Colonic mucosa (tissue), 4 donors: ENCODE measurements at regions of chr17 and their contacts with region 1.

Region 1: DNA sequence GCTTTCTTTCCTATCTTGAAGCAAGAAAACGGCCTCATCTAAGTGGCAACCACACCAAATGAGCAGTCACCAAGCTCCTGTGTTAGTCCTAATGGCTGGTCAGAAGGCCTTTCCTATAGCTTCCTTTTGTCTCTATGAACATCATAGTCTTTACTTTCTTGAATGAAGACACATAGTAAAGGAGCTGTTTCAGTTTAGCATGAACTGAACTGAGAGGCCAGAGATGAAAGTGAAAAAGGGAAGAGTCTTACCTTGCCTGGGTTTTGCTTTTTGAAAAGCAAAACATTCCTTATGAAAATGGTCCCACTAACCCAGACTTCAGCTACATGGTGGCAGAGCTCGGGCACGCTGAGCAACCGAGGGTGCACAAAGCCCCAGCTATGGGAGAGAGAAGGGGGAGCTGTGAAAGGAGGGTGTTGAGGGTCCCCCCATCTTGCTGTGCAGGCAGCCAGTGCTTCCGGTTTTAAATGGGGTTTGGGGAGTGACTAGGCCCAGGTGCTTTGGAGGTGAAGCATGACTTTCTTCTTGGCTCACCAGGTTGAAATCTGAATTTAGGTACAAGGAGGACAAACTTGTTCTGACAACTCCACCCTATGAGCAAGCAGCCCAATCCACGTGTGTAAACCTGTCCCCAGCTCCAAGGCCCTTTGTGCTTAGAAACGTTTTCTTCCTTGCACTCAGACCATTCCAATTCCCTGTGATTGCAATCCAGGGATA is 9.1 kb upstream of the PSMC3IP start:
- DNase-seq: no peak
- H3K4me3 ChIP-seq: no peak overlapping the region
- H3K27ac ChIP-seq: no peak overlapping the region
- H3K4me1 ChIP-seq: no peaks in the 10 kb centered on the region
- H3K27me3 ChIP-seq: no peaks in the 10 kb centered on the region
- CTCF ChIP-seq: no peak

Region 2: DNA sequence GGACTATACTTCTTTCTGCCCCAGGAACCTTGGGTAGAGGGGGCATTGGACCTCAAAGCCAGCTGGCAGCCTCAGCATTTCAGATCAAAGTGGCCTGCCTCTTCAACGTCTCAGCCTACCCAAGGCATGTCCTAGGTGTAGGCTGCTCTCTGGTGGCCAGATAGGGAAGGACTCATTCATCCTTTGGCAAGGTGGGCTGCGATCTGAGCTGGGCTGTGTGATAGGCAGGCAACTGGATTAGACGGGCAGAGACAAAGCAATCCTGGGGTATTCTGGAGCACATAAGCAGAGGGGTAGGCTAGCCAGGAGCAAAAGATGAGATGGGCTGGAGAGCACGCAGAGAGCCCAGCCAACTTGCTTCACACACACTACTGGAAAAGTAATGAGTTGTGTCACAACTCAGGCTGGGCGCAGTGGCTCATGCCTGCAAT is 59.4 kb before region 1 on chr17:
- intact Hi-C with region 1: no loop called
- DNase-seq: peak; percentile 86
- H3K4me3 ChIP-seq: no peak overlapping the region
- H3K27ac ChIP-seq: no peak overlapping the region
- H3K4me1 ChIP-seq: no peaks in the 10 kb centered on the region
- H3K27me3 ChIP-seq: no peaks in the 10 kb centered on the region
- CTCF ChIP-seq: peak; percentile 87

Region 3: DNA sequence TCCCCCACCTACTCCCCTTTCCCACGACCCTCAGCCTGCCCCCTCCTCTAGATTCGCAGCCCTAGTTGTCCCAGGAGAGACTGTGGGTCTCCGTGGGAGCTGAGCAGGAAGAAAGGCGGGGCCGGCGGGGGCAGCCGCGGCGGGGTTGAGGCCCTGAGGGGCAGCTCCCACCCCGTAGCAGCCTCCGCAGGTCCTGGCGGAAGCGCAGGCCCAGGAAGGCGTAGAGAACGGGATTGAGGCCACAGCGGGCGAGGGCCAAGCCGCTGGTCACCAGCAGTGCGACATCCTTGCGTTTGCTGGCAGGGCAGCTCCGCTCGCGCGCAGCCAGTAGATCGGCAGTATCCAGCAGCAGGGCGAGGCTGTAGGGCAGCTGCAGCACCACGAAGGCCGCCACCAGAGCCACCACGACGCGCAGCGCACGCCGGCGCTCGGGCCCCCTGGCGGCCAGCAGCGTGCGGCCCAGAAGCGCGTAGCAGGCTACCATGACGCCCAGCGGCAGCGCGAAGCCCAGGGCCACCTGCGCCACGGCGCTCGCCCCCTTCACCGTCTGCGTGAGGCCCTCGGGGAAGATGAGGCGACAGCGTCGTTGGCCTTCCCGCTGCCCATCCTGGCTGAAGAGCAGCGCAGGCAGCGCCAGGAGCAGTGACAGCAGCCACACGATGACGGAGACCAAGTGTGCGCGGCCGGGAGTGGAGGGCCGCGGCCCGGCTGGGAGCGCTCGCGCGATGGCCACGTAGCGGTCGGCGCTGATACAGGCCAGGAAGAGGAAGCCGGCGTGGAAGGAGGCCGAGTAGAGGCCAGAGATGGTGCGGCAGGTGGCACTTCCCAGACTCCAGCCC is 93.0 kb after region 1 on chr17:
- intact Hi-C with region 1: loop called (anchors 10 kb)
- DNase-seq: peak; percentile 79
- H3K4me3 ChIP-seq: peak overlapping the region; percentile 38
- H3K27ac ChIP-seq: peak overlapping the region; percentile 95
- H3K4me1 ChIP-seq: peaks cover 45% of the 10 kb centered on the region
- H3K27me3 ChIP-seq: peaks cover 7% of the 10 kb centered on the region
- CTCF ChIP-seq: peak; percentile 77